PC-9 (cell line): ENCODE measurements at regions of chr12 and their contacts with region 1.

Region 1: GRCh38 chr12:56679834-56680575 is 8.1 kb downstream of the PTGES3 start:
- DNase-seq: no peak
- H3K4me3 ChIP-seq: no peak overlapping the region
- H3K27ac ChIP-seq: no peak overlapping the region
- H3K4me1 ChIP-seq: peaks cover 23% of the 10 kb centered on the region
- H3K27me3 ChIP-seq: no peaks in the 10 kb centered on the region
- CTCF ChIP-seq: no peak

Region 2: GRCh38 chr12:56931474-56931978 is 251.5 kb after region 1 on chr12:
- CTCF ChIA-PET with region 1: no interaction called
- POLR2A ChIA-PET with region 1: interaction called, 15 read pairs
- intact Hi-C with region 1: no loop called
- DNase-seq: no peak
- H3K4me3 ChIP-seq: no peak overlapping the region
- H3K27ac ChIP-seq: no peak overlapping the region
- H3K4me1 ChIP-seq: peaks cover 14% of the 10 kb centered on the region; the same call in 1 of the 2 replicates
- H3K27me3 ChIP-seq: 0 out of 2 replicates have a peak, but pooled peaks cover 8% of the 10 kb centered on the region
- CTCF ChIP-seq: no peak